ENCODE measurements at regions of chr5 and their contacts with region 1.

Region 1: DNA sequence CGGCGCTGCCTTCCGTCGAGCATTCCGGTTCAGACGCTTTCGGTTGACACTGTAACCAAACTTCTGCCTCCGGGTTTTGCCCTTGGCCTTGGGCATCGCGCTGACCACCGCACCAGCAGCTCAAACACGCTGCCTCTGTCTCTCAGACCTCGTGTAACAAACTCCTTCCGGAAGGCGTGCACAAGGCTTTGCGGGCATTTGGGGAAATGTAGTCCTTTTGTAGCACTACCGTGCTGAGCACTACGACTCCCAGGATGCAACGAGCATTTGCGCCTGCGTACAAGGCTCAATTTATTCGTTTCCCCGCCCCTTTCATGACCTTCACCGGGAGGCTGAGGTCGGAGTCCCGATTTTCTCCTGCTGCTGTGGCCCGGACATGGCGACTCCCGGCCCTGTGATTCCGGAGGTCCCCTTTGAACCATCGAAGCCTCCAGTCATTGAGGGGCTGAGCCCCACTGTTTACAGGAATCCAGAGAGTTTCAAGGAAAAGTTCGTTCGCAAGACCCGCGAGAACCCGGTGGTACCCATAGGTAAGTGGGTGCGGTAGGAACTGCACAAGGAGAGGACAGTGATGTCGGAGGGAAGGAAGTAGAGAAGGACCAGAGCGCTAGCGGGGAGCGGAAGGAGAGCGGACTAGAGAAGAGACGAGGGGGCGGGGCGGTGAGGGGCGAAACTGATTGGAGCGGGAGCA is at the starts of genes HIGD2A and NOP16:
- DNase-seq: peak; percentile 95 to 98
- H3K4me3 ChIP-seq: peak within 1 kb of the TSS; percentile 74
- H3K27ac ChIP-seq: peak within 1 kb of the TSS; percentile 71
- H3K4me1 ChIP-seq: peaks cover 22% of the 10 kb centered on the region
- H3K27me3 ChIP-seq: no peaks in the 10 kb centered on the region
- CTCF ChIP-seq: no peak
- total RNA-seq, gene HIGD2A: 133 and 149 TPM in 2 replicates
- total RNA-seq, gene NOP16: 31.5 and 35.8 TPM in 2 replicates

Region 2: GRCh38 chr5:175789670-175790069 is 598.9 kb before region 1 on chr5:
- CTCF ChIA-PET with region 1: no interaction called
- POLR2A ChIA-PET with region 1: no interaction called
- intact Hi-C with region 1: no loop called
- DNase-seq: no peak
- H3K4me3 ChIP-seq: no peak overlapping the region
- H3K27ac ChIP-seq: no peak overlapping the region
- H3K4me1 ChIP-seq: no peaks in the 10 kb centered on the region
- H3K27me3 ChIP-seq: no peaks in the 10 kb centered on the region
- CTCF ChIP-seq: no peak; the same call in 1 of the 2 replicates

Region 3: GRCh38 chr5:176133289-176133870 is 255.2 kb before region 1 on chr5:
- CTCF ChIA-PET with region 1: no interaction called
- POLR2A ChIA-PET with region 1: no interaction called
- intact Hi-C with region 1: no loop called
- DNase-seq: no peak
- H3K4me3 ChIP-seq: no peak overlapping the region
- H3K27ac ChIP-seq: no peak overlapping the region
- H3K4me1 ChIP-seq: no peaks in the 10 kb centered on the region
- H3K27me3 ChIP-seq: peaks cover 83% of the 10 kb centered on the region
- CTCF ChIP-seq: no peak

Region 4: DNA sequence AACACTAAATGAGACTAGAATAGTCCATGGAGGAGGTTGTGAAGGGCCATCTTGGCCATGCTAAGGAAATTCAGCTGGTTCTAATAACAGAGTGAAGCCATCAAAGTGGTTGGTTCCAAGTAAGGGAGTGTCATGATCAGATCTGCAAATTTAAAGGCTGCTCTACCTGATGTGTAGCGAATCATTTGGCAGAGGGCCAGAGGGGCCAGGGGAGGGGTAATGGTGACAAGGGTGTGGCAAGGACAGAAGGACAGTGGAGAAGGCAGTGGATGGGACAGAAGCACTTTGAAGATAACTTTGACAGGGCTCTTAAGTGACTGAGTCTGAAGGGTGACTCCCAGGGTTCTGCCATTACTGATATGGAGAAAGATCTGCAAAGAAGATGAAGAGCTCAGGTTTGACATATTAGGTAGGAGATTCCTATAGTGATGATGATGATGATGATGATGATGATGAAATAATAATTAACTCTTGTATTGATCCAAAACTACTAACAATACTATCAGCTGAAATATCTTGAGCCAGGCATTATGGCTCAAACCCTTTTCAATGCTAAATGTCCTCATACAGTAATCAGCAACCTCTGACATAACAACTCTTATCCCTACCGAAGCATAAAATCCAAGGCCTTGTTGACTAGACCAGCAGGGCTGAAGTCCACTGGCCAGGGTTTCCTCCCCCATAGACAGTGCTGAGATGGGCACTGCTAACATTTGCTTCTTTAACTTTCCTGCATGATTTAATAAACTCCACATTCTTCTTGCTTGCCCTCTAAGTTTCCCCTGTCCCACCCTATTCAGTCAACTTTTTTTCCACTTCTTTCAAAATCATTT is 47.0 kb before region 1 on chr5:
- CTCF ChIA-PET with region 1: no interaction called
- POLR2A ChIA-PET with region 1: no interaction called
- intact Hi-C with region 1: no loop called
- DNase-seq: no peak
- H3K4me3 ChIP-seq: no peak overlapping the region
- H3K27ac ChIP-seq: no peak overlapping the region
- H3K4me1 ChIP-seq: no peaks in the 10 kb centered on the region
- H3K27me3 ChIP-seq: no peaks in the 10 kb centered on the region
- CTCF ChIP-seq: no peak

Region 5: DNA sequence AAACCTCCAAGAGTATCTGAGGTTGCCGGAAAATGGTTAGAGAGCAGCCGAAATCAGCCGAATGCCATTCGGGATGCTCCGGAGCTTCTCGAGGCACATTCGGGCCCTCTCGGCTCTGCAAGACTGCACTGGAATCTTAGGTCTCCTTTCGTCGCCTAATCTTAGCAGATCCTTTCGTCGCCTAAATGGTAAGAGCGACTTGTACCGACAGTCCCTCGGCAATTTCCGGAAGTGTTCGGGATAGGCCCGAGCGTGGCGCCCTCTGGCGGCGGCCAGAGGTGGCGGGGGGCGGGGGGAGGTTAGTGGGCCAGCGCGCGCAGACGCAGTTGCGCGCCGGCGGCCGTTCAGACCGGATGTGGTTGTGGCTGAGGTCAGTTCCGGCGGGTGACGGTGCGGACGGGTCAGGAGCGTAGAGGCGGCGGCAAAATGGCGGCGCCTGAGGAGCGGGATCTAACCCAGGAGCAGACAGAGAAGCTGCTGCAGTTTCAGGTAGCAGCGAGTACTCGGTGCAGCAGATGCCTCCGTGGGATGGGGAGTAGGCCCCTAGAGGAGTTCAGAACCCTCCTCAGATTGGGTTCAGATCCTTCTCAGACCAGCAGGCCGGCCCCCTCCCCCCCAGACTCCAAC is 59.5 kb after region 1 on chr5 and contains the start of gene FAF2:
- CTCF ChIA-PET with region 1: interaction called, 3 read pairs
- POLR2A ChIA-PET with region 1: no interaction called
- intact Hi-C with region 1: loop called (anchors 1 kb)
- DNase-seq: peak; percentile 97 to 100
- H3K4me3 ChIP-seq: peak within 1 kb of the TSS; percentile 89
- H3K27ac ChIP-seq: peak within 1 kb of the TSS; percentile 89
- H3K4me1 ChIP-seq: peaks cover 34% of the 10 kb centered on the region
- H3K27me3 ChIP-seq: no peaks in the 10 kb centered on the region
- CTCF ChIP-seq: peak; percentile 97
- total RNA-seq, gene FAF2: 41.2 and 59.7 TPM in 2 replicates

Region 6: GRCh38 chr5:176492431-176492830 is 103.8 kb after region 1 on chr5:
- CTCF ChIA-PET with region 1: no interaction called
- POLR2A ChIA-PET with region 1: no interaction called
- intact Hi-C with region 1: no loop called
- DNase-seq: no peak
- H3K4me3 ChIP-seq: no peak overlapping the region
- H3K27ac ChIP-seq: no peak overlapping the region
- H3K4me1 ChIP-seq: peaks cover 55% of the 10 kb centered on the region
- H3K27me3 ChIP-seq: no peaks in the 10 kb centered on the region
- CTCF ChIP-seq: no peak